ENCODE measurements at regions of chr2 and their contacts with region 1.

Region 1: GRCh38 chr2:227766373-227766883 is 20.7 kb downstream of the SCYGR8 start:
- DNase-seq: peak; percentile 72
- H3K4me3 Mint-ChIP-seq: no peak overlapping the region
- H3K27ac Mint-ChIP-seq: no peak overlapping the region
- H3K4me1 Mint-ChIP-seq: no peaks in the 10 kb centered on the region
- H3K27me3 Mint-ChIP-seq: no peaks in the 10 kb centered on the region

Region 2: GRCh38 chr2:227125506-227125905 is 640.9 kb before region 1 on chr2:
- CTCF ChIA-PET with region 1: interaction called, 12 read pairs
- POLR2A ChIA-PET with region 1: no interaction called
- intact Hi-C with region 1: loop called (anchors 2 kb)
- DNase-seq: no peak
- H3K4me3 Mint-ChIP-seq: no peak overlapping the region
- H3K27ac Mint-ChIP-seq: no peak overlapping the region
- H3K4me1 Mint-ChIP-seq: no peaks in the 10 kb centered on the region
- H3K27me3 Mint-ChIP-seq: peaks cover 13% of the 10 kb centered on the region

Region 3: DNA sequence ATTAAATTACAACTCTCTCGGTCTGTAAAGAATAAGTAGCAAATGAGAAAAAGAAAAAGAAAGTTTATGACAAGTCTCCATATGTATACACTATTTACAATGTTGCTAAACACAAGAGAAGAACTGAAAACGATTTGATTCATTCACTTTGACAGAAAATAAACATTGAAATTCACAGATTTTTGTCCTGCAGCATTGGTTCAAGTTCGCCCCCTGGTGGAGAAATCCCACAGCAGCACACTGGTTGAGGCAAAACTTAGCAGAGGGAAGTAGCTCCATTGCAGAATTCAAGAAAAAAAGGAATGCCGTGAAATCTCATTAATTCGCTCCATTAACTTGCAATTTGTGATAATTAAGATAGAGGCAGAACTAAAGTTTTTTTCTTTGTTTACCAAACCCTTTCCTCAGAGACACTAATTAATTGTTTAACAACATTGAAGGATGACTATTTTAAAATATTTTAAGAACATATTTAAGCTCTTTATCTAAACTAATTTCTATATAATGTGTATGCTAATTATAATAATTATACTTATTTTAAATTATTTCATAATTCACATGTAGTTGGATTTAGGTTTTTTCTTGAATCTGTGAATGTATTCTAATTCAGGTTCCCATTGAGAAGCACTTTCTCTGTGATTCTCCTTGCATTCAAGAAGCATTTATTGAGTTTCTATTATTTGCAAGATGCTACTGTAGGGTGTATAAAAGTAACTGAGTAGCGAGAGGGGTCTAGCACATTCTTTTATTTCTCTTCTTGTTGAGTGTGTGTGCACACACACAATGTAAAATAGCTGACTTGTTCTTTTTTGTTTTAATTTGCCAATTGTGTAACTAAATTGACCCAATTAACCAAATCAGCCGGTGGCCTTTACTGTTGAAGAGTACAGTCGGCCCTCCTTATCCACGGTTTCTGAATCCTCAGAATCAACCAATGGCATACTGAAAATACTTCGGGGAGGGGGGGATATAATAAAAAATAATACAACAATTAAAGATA is 527.9 kb before region 1 on chr2:
- CTCF ChIA-PET with region 1: interaction called, 26 read pairs
- POLR2A ChIA-PET with region 1: no interaction called
- intact Hi-C with region 1: no loop called
- DNase-seq: peak; percentile 70
- H3K4me3 Mint-ChIP-seq: no peak overlapping the region
- H3K27ac Mint-ChIP-seq: no peak overlapping the region
- H3K4me1 Mint-ChIP-seq: no peaks in the 10 kb centered on the region
- H3K27me3 Mint-ChIP-seq: peaks cover 6% of the 10 kb centered on the region

Region 4: GRCh38 chr2:227471924-227472264 is 294.5 kb before region 1 on chr2 and contains the start of gene AGFG1:
- CTCF ChIA-PET with region 1: interaction called, 4 read pairs
- POLR2A ChIA-PET with region 1: no interaction called
- intact Hi-C with region 1: loop called (anchors 5 kb)
- DNase-seq: peak; percentile 90
- H3K4me3 Mint-ChIP-seq: peak within 1 kb of the TSS; percentile 82
- H3K27ac Mint-ChIP-seq: peak within 1 kb of the TSS; percentile 77
- H3K4me1 Mint-ChIP-seq: peaks cover 50% of the 10 kb centered on the region
- H3K27me3 Mint-ChIP-seq: no peaks in the 10 kb centered on the region
- total RNA-seq, gene AGFG1: 119 to 127 TPM

Region 5: GRCh38 chr2:227783404-227784138 is 17.1 kb after region 1 on chr2:
- CTCF ChIA-PET with region 1: interaction called, 13 read pairs
- POLR2A ChIA-PET with region 1: no interaction called
- intact Hi-C with region 1: no loop called
- DNase-seq: peak; percentile 18
- H3K4me3 Mint-ChIP-seq: peak overlapping the region; percentile 66
- H3K27ac Mint-ChIP-seq: peak overlapping the region; percentile 77
- H3K4me1 Mint-ChIP-seq: peaks cover 19% of the 10 kb centered on the region
- H3K27me3 Mint-ChIP-seq: peaks cover 5% of the 10 kb centered on the region

Region 6: DNA sequence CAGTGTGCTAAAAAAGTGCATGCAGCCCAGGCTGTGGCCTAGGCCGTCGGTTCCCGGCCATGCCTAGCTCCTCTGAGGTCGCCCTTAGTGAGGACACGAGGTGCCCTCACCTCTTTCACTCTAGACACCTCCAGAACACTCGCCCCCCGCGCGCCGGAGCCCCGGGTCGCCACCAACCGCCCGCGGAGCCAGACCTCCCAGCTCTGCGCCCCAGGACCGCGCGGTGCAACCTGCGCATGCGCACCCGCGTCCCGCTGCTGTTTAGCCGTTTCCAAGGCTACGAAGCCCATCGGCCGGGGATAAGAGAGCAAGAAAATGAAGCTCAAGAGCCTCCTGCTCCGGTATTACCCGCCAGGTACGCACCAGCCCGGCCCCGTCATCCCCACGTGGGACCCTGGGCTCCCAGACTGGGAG is 105.0 kb after region 1 on chr2 and contains the start of gene DAW1:
- CTCF ChIA-PET with region 1: no interaction called
- POLR2A ChIA-PET with region 1: no interaction called
- intact Hi-C with region 1: no loop called
- DNase-seq: peak; percentile 63
- H3K4me3 Mint-ChIP-seq: peak within 1 kb of the TSS; percentile 27
- H3K27ac Mint-ChIP-seq: no peak within 1 kb of the TSS
- H3K4me1 Mint-ChIP-seq: no peaks in the 10 kb centered on the region
- H3K27me3 Mint-ChIP-seq: peaks cover 29% of the 10 kb centered on the region
- total RNA-seq, gene DAW1: not detected

Region 7: DNA sequence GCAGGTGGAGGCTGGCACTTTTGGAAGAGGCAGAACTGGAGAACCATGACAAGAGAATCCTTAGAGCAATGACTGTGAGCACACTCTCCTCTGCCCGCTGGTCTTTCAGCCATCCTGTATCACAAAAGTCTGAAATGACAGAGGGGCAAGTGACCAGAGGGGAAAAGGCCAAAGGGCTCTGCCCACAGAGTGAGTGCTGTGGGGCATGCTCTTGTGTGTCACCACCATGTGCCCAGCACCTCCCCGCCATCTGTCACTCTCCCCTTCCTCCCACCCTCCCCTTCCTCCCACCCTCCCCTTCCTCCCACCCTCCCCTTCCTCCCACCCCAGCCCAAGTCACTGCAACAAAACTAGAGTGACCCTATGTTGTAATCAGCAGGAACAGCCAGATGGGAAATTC is 137.0 kb after region 1 on chr2:
- CTCF ChIA-PET with region 1: no interaction called
- POLR2A ChIA-PET with region 1: no interaction called
- intact Hi-C with region 1: no loop called
- DNase-seq: no peak
- H3K4me3 Mint-ChIP-seq: no peak overlapping the region
- H3K27ac Mint-ChIP-seq: no peak overlapping the region
- H3K4me1 Mint-ChIP-seq: no peaks in the 10 kb centered on the region
- H3K27me3 Mint-ChIP-seq: peaks cover 2% of the 10 kb centered on the region

Region 8: GRCh38 chr2:228652366-228652765 is 885.9 kb after region 1 on chr2:
- CTCF ChIA-PET with region 1: no interaction called
- POLR2A ChIA-PET with region 1: no interaction called
- intact Hi-C with region 1: no loop called
- DNase-seq: no peak
- H3K4me3 Mint-ChIP-seq: no peak overlapping the region
- H3K27ac Mint-ChIP-seq: no peak overlapping the region
- H3K4me1 Mint-ChIP-seq: no peaks in the 10 kb centered on the region
- H3K27me3 Mint-ChIP-seq: no peaks in the 10 kb centered on the region